Mammary epithelial cell (primary cell): ENCODE measurements at regions of chr11 and their contacts with region 1.

Region 1: GRCh38 chr11:57379732-57380131 is 1.2 kb downstream of the PRG3 start:
- DNase-seq: no peak
- H3K4me3 ChIP-seq: no peak overlapping the region
- H3K27ac ChIP-seq: no peak overlapping the region
- H3K4me1 ChIP-seq: no peaks in the 10 kb centered on the region
- H3K27me3 ChIP-seq: no peaks in the 10 kb centered on the region
- CTCF ChIP-seq: no peak

Region 2: DNA sequence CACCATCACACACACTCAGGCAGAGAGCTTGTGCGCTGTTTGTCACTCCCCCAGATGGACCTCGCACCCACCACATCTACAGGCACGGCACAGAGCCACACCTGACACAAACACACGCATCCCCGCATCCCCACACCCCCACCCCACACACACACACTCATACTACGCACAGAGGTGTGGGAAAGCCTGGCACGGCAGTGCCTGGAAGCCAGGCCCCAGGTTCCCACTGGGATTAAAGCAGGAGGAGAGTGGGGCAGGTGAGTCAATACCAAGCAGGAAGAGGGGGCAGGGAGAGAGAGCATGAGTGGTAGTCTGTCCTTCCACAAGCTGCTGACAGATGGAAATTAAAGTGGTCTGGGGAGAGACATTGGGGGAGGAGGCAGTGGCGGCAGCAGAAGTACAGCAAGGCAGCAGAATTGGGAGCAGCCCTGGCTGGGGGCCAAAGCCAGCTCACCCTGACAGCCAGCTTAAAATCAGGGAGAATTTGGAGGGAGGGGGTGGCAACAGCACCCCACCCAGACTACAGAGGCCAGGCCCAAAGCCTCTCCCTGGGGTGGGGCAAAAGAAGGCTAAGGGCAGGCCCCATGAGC is 75.6 kb before region 1 on chr11:
- CTCF ChIA-PET with region 1: no interaction called
- dilution Hi-C with region 1: loop called (anchors 5 kb)
- in situ Hi-C with region 1: no loop called
- intact Hi-C with region 1: no loop called
- DNase-seq: peak; percentile 62
- H3K4me3 ChIP-seq: no peak overlapping the region
- H3K27ac ChIP-seq: peak overlapping the region; percentile 45
- H3K4me1 ChIP-seq: peaks cover 55% of the 10 kb centered on the region
- H3K27me3 ChIP-seq: no peaks in the 10 kb centered on the region
- CTCF ChIP-seq: no peak

Region 3: DNA sequence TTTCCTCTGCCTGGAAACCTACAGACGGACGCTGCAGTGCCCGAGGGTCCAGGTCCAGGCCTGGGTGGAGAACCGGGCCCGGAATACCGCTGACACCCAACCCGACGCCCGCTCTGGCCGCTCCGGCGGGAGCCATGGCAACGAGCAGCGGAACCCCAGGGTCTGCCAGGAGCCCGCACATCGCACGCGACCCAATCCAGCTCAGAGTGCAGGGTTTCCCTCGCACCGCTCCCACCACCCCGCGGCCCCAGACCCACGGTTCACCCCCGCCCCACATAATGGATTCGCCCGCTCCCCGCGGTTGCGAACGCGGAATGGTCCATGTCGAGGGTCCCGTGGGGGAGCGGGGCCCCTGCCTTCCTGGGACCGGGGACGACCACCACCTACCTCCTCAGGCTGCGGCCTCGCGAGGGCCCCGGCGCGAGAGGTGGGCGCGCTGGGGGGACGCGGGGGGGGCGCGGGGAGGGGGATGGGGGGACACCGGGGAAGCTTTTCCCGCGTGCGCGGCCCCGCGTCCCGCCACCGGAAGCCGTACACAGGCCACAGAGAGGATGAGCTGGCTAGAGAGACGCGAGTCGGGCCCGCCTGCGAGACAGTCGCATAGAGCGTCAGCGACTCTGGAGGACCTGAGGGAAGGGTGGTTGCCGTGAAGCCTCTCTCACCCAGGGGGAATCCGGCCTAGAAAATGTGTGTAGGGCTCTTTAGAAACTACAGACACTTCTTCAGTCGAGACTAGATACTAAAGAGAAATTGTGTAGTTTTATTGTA is 44.2 kb before region 1 on chr11 and contains the start of gene SSRP1:
- CTCF ChIA-PET with region 1: no interaction called
- dilution Hi-C with region 1: no loop called
- in situ Hi-C with region 1: no loop called
- intact Hi-C with region 1: no loop called
- DNase-seq: peak; percentile 78
- H3K4me3 ChIP-seq: peak within 1 kb of the TSS; percentile 56 to 91 (median 82)
- H3K27ac ChIP-seq: peak within 1 kb of the TSS; percentile 73
- H3K4me1 ChIP-seq: peaks cover 15% of the 10 kb centered on the region
- H3K27me3 ChIP-seq: no peaks in the 10 kb centered on the region
- CTCF ChIP-seq: no peak
- total RNA-seq, gene SSRP1: 53.0 to 127 TPM